ENCODE measurements at regions of chr1 and their contacts with region 1.

Region 1: DNA sequence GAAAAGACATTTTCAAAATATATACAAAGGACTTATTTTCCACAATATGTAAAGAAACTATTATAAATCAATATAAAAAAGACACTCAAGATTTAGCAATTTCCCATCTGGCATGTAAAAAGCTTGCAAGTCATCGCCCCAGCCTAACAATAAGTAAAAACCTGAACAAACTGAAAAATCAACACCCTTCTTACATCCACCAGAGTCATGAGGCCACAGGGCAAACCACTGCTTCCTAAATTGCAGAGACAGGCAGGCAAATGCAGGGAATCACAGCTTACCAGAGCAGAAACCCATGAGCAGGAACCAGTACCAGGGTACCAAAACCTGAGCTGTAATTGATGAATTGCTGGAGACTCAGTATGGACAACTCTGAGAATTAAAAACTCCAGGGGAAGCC is 16.7 kb upstream of the WNT2B start:
- DNase-seq: no peak
- ATAC-seq: no peak
- H3K4me3 ChIP-seq: no peak overlapping the region
- H3K27ac ChIP-seq: no peak overlapping the region
- H3K4me1 ChIP-seq: no peaks in the 10 kb centered on the region
- H3K27me3 ChIP-seq: no peaks in the 10 kb centered on the region
- CTCF ChIP-seq: no peak

Region 2: GRCh38 chr1:112358798-112359408 is 133.2 kb before region 1 on chr1:
- CTCF ChIA-PET with region 1: no interaction called
- POLR2A ChIA-PET with region 1: interaction called, 10 read pairs
- intact Hi-C with region 1: no loop called
- DNase-seq: peak; percentile 45
- ATAC-seq: peak; percentile 98
- H3K4me3 ChIP-seq: no peak overlapping the region
- H3K27ac ChIP-seq: no peak overlapping the region
- H3K4me1 ChIP-seq: no peaks in the 10 kb centered on the region
- H3K27me3 ChIP-seq: peaks cover 67% of the 10 kb centered on the region
- CTCF ChIP-seq: peak; percentile 85

Region 3: DNA sequence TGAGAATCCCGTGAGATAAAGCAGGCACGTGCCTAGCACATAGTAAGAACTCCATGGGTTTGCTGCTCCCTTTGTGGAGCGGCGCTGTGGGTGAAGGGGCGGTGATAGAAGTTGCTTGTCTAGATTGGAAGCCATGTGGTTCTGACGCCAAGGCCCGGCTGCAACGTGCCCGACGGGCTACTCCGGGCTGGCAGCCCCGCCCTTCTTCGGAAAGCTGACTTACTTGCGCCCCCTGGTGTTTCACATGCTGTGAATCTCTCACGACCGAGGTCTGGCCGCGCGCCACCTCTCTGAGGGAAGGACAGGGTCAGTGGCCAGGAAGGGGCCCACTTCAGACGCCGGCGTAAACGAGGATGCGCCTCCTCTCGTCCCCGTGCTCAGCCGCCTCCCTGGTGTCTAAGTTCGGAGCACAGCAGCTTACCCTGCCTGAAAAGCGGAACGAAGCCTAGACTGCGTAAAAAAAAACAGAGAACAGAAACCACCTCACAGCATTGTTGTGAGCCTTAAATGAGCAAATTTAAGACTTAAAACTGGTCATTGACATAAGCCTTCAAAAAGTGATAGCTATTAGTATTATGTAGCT is 25.9 kb before region 1 on chr1:
- CTCF ChIA-PET with region 1: no interaction called
- POLR2A ChIA-PET with region 1: no interaction called
- intact Hi-C with region 1: no loop called
- DNase-seq: peak; percentile 94
- ATAC-seq: peak; percentile 87
- H3K4me3 ChIP-seq: peak overlapping the region; percentile 62
- H3K27ac ChIP-seq: peak overlapping the region; percentile 18
- H3K4me1 ChIP-seq: peaks cover 21% of the 10 kb centered on the region
- H3K27me3 ChIP-seq: no peaks in the 10 kb centered on the region
- CTCF ChIP-seq: peak; percentile 88

Region 4: DNA sequence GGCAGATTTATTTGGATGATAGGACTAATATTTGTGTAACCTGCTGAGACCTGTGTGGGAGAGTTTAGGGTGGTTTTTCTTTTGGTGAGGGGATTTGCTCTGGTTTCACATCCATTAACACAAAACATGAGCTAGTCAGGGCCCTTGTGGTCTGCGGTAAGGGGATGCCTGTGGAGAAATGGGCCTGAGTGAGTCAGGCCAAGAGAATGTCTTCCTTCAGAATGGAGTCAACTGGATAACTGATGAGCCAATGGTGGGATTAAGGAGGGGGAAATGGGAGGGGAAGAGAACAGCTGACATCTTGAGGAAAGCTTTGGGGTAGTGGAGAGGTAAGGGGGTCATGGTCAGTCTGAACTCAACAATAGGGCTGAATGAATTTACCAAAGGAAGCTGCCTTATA is 30.5 kb after region 1 on chr1:
- CTCF ChIA-PET with region 1: no interaction called
- POLR2A ChIA-PET with region 1: no interaction called
- intact Hi-C with region 1: no loop called
- DNase-seq: peak; percentile 42
- ATAC-seq: no peak
- H3K4me3 ChIP-seq: no peak overlapping the region
- H3K27ac ChIP-seq: no peak overlapping the region
- H3K4me1 ChIP-seq: no peaks in the 10 kb centered on the region
- H3K27me3 ChIP-seq: no peaks in the 10 kb centered on the region
- CTCF ChIP-seq: no peak

Region 5: GRCh38 chr1:112594259-112594884 is 102.3 kb after region 1 on chr1:
- CTCF ChIA-PET with region 1: no interaction called
- POLR2A ChIA-PET with region 1: interaction called, 17 read pairs
- intact Hi-C with region 1: no loop called
- DNase-seq: peak; percentile 51
- ATAC-seq: peak; percentile 40
- H3K4me3 ChIP-seq: no peak overlapping the region
- H3K27ac ChIP-seq: no peak overlapping the region
- H3K4me1 ChIP-seq: no peaks in the 10 kb centered on the region
- H3K27me3 ChIP-seq: no peaks in the 10 kb centered on the region
- CTCF ChIP-seq: no peak